Activated T-helper 2 cell treated with anti-CD3 and anti-CD28 coated beads, Interferon-gamma antibody, Interleukin-2, Interleukin-4, amounts not matched to agents 10 μg/mL and 5 μg/mL and 100 μg/mL, durations not matched to agents 14 hours and 24 hours and 36 hours (primary cell): ENCODE measurements at regions of chr17 and their contacts with region 1.

Region 1: GRCh38 chr17:5486204-5487124 is at the start of gene MIS12:
- DNase-seq: peak; percentile 96
- H3K4me3 Mint-ChIP-seq: peak within 1 kb of the TSS; percentile 97
- H3K27ac Mint-ChIP-seq: peak within 1 kb of the TSS; percentile 98
- H3K4me1 Mint-ChIP-seq: peaks cover 38% of the 10 kb centered on the region
- H3K27me3 Mint-ChIP-seq: no peaks in the 10 kb centered on the region
- total RNA-seq, gene MIS12: 34.1 and 34.9 TPM in 2 replicates

Region 2: GRCh38 chr17:5419356-5419958 is 67.0 kb before region 1 on chr17 and contains the start of gene NUP88:
- intact Hi-C with region 1: loop called (anchors 1 kb)
- DNase-seq: peak; percentile 96
- H3K4me3 Mint-ChIP-seq: peak within 1 kb of the TSS; percentile 99
- H3K27ac Mint-ChIP-seq: peak within 1 kb of the TSS; percentile 98
- H3K4me1 Mint-ChIP-seq: peaks cover 28% of the 10 kb centered on the region
- H3K27me3 Mint-ChIP-seq: no peaks in the 10 kb centered on the region
- total RNA-seq, gene NUP88: 139 and 152 TPM in 2 replicates

Region 3: DNA sequence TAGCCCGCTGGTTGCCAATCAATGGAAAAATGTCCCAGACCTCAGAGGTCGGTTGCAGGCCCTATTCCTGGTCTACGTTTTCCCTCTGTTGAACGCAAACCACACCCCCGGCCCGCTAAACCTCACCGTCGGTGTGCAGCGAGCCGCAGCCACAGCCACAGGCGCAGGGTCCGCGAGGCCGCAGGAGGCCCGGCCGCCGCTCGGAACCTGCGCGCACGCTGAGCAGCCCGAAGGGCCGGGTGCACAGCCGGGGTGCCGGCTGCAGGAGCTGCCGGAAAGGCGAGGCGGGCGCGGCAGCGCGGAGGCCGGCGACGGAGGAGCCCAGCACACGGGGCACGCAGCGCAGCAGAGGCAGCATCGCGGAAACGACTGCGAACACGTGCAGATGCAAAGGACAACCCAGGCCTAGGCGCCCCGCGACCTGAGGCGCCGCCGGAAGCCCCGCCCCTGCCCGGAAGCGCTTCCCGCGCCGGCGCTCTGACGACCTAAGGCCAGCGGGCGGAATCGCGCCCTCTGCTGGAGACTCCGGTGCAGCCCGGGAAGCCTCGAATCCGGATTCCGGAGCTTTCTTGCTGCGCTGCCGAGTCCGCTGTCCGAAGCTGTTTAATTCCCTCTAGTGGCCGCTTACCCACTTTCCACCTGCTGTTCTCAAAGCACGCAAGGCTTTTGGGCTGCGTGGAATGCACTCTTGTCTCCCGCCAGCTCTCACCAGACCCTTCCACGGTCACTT is 47.6 kb before region 1 on chr17 and contains the start of gene C1QBP:
- intact Hi-C with region 1: loop called (anchors 5 kb)
- DNase-seq: peak; percentile 90
- H3K4me3 Mint-ChIP-seq: peak within 1 kb of the TSS; percentile 90
- H3K27ac Mint-ChIP-seq: peak within 1 kb of the TSS; percentile 82
- H3K4me1 Mint-ChIP-seq: peaks cover 36% of the 10 kb centered on the region
- H3K27me3 Mint-ChIP-seq: no peaks in the 10 kb centered on the region
- total RNA-seq, gene C1QBP: 363 and 372 TPM in 2 replicates

Region 4: GRCh38 chr17:5468075-5468473 is 18.4 kb before region 1 on chr17:
- intact Hi-C with region 1: loop called (anchors 1 kb)
- DNase-seq: no peak
- H3K4me3 Mint-ChIP-seq: peak overlapping the region; percentile 95
- H3K27ac Mint-ChIP-seq: peak overlapping the region; percentile 44
- H3K4me1 Mint-ChIP-seq: peaks cover 39% of the 10 kb centered on the region
- H3K27me3 Mint-ChIP-seq: no peaks in the 10 kb centered on the region

Region 5: DNA sequence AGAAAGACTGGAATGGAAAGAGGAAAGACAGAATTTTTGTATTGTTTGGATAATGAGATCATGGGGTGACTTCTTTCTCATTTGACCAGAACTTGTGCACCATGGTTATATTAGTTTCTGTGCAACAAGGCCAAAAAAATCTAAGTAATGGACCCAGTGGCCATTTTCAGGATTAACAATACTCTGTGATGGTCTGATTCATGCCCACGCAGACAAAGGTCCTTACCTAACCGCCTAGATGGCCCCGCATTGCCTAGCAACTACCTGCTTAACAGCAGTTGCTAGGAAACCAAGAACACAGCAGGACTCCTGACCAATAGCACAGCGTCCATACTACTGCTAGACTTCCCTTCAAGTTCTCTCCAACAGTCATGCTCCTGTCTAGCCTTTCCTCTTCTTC is 22.3 kb after region 1 on chr17:
- intact Hi-C with region 1: no loop called
- DNase-seq: no peak
- H3K4me3 Mint-ChIP-seq: no peak overlapping the region
- H3K27ac Mint-ChIP-seq: no peak overlapping the region
- H3K4me1 Mint-ChIP-seq: peaks cover 18% of the 10 kb centered on the region
- H3K27me3 Mint-ChIP-seq: no peaks in the 10 kb centered on the region

Region 6: DNA sequence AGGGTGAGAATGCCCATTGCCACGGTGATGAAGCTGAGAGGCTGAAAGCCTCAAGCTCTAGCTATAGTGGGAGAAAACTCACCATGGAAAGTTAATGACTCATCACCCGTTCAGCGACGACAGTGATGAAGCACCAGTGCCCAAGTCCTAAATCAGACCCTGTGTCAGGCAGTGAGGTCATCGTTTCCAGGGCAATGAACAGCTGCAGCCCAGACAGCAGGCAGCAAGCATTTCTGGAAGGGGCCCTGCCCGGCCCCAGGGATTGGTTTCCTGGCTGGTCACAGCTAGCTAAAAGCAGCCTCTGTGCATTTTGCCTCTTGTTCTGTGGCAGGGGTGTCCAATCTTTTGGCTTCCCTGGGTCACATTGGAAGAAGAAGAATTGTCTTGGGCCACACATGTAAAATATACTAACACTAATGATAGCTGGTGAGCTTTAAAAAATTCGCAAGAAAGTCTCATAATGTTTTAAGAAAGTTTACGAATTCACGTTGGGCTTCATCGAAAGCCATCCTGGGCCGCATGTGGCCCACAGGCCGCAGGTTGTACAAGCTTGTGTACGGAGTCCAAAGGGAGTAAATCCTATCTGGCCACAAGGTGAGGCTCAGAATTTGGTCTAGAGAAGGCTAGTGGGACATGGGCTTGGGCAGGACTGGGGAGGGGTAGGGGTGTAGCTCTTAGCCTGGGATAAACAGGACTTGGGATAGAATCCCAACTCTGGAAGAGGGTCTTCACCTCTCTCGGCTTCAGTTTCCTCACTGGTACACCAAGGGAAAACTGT is 40.5 kb after region 1 on chr17:
- intact Hi-C with region 1: loop called (anchors 1 kb)
- DNase-seq: no peak
- H3K4me3 Mint-ChIP-seq: no peak overlapping the region
- H3K27ac Mint-ChIP-seq: peak overlapping the region; percentile 87
- H3K4me1 Mint-ChIP-seq: peaks cover 14% of the 10 kb centered on the region
- H3K27me3 Mint-ChIP-seq: no peaks in the 10 kb centered on the region

Region 7: DNA sequence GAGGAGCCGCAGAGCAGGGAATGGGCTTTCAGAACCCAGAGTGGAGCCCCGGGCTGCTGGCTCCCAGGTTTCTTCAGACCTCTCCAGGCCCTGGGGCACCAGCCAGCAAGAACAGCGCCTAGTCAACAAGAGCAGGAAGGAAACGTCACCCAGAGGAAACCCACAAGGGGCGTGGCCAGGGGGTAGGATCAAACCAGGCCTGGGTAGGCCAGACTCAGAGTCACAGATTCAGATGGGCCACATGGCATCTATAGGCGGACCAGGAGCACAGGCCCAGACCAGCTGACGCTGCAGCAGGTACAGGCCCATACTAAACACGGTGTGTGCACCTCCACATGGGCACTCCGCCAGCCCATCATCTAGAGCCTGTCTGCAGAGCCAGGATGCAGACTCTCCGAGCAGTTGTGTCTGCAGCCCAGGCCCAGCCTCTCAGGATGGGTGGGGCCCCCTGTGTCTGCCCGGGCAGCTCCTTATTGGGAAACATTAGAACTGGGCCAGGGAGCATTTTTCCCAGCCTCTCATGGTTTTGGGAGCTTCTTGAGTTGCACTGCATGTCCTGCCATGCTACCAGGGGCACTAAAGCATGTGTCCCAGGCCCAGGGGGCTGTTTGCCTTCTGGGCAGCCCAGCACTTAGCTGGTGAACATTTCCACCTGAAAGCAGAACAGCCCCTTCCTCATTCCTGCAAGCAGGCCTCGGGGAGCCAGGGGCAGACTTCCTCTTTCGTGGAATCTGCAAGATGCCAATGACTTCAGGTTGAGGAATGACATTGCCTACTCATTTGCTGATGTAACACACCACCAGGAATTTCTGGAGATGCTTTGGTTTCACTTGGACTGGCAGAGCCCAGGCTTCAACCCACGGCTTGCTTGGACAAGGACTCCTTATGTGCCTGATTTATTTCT is 98.2 kb after region 1 on chr17 and contains the start of gene NLRP1:
- intact Hi-C with region 1: loop called (anchors 10 kb)
- DNase-seq: peak; percentile 92
- H3K4me3 Mint-ChIP-seq: peak within 1 kb of the TSS; percentile 89
- H3K27ac Mint-ChIP-seq: peak within 1 kb of the TSS; percentile 93
- H3K4me1 Mint-ChIP-seq: peaks cover 55% of the 10 kb centered on the region
- H3K27me3 Mint-ChIP-seq: peaks cover 6% of the 10 kb centered on the region
- total RNA-seq, gene NLRP1: 26.3 and 26.9 TPM in 2 replicates